ENCODE measurements at regions of chr10 and their contacts with region 1.

Region 1: GRCh38 chr10:102917962-102918816 is at the start of gene CNNM2:
- DNase-seq: peak; percentile 99 to 100
- ATAC-seq: peak; percentile 96 to 99 (median 98)
- H3K4me3 ChIP-seq: peak within 1 kb of the TSS; percentile 65 to 100 (median 91)
- H3K27ac ChIP-seq: peak within 1 kb of the TSS; percentile 58 to 93 (median 84)
- H3K4me1 ChIP-seq: peaks cover 6 to 61% (median 43%) of the 10 kb centered on the region in 9 donors
- H3K27me3 ChIP-seq: peaks cover 0 to 13% (median 0%) of the 10 kb centered on the region in 7 donors
- CTCF ChIP-seq: peak in 1 of 9 donors; percentile 19
- total RNA-seq, gene CNNM2: 2.0 to 5.3 (median 4.1) TPM

Region 2: GRCh38 chr10:102853944-102854694 is 64.1 kb before region 1 on chr10 and contains the start of gene BORCS7:
- intact Hi-C with region 1: no loop called
- DNase-seq: peak; percentile 84 to 95
- ATAC-seq: peak; percentile 99 to 100 (median 100)
- H3K4me3 ChIP-seq: peak within 1 kb of the TSS; percentile 53 to 86 (median 76)
- H3K27ac ChIP-seq: peak within 1 kb of the TSS; percentile 91 to 98 (median 96)
- H3K4me1 ChIP-seq: peaks cover 0 to 30% (median 23%) of the 10 kb centered on the region in 9 donors
- H3K27me3 ChIP-seq: no peaks in the 10 kb centered on the region
- CTCF ChIP-seq: peak in 1 of 9 donors; percentile 6
- total RNA-seq, gene BORCS7: 14.5 to 24.2 (median 17.6) TPM

Region 3: GRCh38 chr10:102894466-102895213 is 23.5 kb before region 1 on chr10:
- intact Hi-C with region 1: no loop called
- DNase-seq: no peak
- ATAC-seq: no peak
- H3K4me3 ChIP-seq: no peak overlapping the region
- H3K27ac ChIP-seq: no peak overlapping the region
- H3K4me1 ChIP-seq: no peaks in the 10 kb centered on the region
- H3K27me3 ChIP-seq: no peaks in the 10 kb centered on the region
- CTCF ChIP-seq: no peak

Region 4: GRCh38 chr10:103053659-103054581 is 135.7 kb after region 1 on chr10:
- intact Hi-C with region 1: loop called in 2 of 10 experiments (anchors 1 to 2 kb)
- DNase-seq: peak; percentile 46 to 67
- ATAC-seq: peak; percentile 75 to 95 (median 90)
- H3K4me3 ChIP-seq: peak overlapping the region in 8 of 10 donors; percentile 10 to 46 (median 38)
- H3K27ac ChIP-seq: peak overlapping the region in 7 of 10 donors; percentile 3 to 59 (median 45)
- H3K4me1 ChIP-seq: peaks cover 0 to 51% (median 25%) of the 10 kb centered on the region in 9 donors
- H3K27me3 ChIP-seq: no peaks in the 10 kb centered on the region
- CTCF ChIP-seq: peak in 8 of 9 donors; percentile 13 to 54 (median 44)

Region 5: GRCh38 chr10:103069453-103070331 is 151.5 kb after region 1 on chr10:
- intact Hi-C with region 1: loop called (anchors 1 to 5 kb)
- DNase-seq: peak; percentile 48 to 49
- ATAC-seq: peak; percentile 58 to 84 (median 80)
- H3K4me3 ChIP-seq: no peak overlapping the region
- H3K27ac ChIP-seq: no peak overlapping the region
- H3K4me1 ChIP-seq: peaks cover 0 to 19% (median 3%) of the 10 kb centered on the region in 9 donors
- H3K27me3 ChIP-seq: no peaks in the 10 kb centered on the region
- CTCF ChIP-seq: peak; percentile 38 to 76 (median 67)

Region 6: DNA sequence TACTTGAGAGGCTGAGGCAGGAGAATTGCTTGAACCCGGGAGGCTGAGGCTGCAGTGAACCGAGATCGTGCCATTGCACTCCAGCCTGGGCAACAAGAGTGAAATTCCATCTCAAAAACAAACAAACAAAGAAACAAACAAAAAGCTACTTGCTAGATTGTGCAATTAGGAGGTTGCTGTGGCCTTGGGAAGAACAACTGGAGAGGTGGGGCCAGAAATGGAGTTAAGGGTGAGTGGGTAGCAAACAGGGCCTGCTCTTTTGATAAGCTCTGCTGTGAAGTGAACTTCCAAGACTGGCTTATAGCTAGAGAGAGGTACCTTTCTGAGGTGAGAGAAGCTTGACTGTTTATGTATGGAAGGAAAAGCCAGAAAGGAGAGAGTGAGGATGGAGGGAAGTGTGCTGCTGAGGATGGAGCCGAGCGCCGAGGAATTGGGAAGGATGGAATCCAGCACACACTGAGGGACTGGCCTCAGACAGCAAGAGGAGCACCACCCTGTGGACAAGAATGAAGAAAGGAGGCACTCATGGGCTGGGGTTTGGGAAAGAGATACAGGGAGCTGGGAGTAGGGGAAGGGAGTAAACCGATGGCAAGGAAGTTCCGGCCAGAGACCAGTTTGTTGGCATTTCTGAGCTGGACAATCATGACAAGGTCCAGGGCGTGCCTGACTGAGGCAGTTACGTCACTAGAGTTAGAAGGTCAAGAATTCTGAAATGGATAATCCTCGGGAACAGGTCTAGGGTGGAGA is 320.5 kb after region 1 on chr10:
- intact Hi-C with region 1: loop called in 2 of 10 experiments (anchors 5 kb)
- DNase-seq: peak in 1 of 2 donors; percentile 33
- ATAC-seq: peak; percentile 62 to 86 (median 80)
- H3K4me3 ChIP-seq: no peak overlapping the region
- H3K27ac ChIP-seq: peak overlapping the region in 1 of 10 donors; percentile 30
- H3K4me1 ChIP-seq: peaks cover 6 to 40% (median 8%) of the 10 kb centered on the region in 9 donors
- H3K27me3 ChIP-seq: no peaks in the 10 kb centered on the region
- CTCF ChIP-seq: peak in 7 of 9 donors; percentile 33 to 56 (median 50)

Region 7: DNA sequence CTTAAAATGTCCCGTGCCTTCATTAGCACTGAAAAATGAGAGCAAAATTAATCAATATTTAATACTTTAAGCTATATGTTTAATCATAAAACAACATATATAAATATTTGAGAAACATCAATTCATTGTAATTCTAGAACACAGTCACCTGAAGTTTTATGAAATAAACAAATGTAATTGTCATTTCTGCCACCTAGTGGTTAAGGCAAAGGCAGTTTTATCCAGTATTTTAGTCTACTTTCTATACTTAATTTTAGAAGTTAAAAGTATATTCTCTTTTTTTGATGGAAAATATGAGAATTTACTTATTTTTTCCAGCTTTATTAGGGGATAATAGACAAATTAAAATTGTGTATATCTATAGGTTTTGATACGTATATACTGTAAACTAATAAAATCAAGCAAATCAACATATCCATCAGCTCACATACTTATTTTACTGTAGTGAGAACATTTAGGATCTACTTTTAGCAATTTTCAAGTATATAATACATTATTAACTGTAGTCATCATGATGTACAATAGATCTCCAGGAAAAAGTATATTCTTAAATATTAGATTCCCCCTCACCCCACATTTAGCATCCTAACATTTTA is 415.8 kb after region 1 on chr10:
- intact Hi-C with region 1: loop called in 2 of 10 experiments (anchors 5 to 10 kb)
- DNase-seq: no peak
- ATAC-seq: no peak
- H3K4me3 ChIP-seq: no peak overlapping the region
- H3K27ac ChIP-seq: no peak overlapping the region
- H3K4me1 ChIP-seq: no peaks in the 10 kb centered on the region
- H3K27me3 ChIP-seq: no peaks in the 10 kb centered on the region
- CTCF ChIP-seq: peak; percentile 23 to 68 (median 58)

Measured in heart right ventricle (tissue), 16 donors.